Posterior cingulate gyrus (tissue), 11 donors: ENCODE measurements at regions of chr1 and their contacts with region 1.

Region 1: DNA sequence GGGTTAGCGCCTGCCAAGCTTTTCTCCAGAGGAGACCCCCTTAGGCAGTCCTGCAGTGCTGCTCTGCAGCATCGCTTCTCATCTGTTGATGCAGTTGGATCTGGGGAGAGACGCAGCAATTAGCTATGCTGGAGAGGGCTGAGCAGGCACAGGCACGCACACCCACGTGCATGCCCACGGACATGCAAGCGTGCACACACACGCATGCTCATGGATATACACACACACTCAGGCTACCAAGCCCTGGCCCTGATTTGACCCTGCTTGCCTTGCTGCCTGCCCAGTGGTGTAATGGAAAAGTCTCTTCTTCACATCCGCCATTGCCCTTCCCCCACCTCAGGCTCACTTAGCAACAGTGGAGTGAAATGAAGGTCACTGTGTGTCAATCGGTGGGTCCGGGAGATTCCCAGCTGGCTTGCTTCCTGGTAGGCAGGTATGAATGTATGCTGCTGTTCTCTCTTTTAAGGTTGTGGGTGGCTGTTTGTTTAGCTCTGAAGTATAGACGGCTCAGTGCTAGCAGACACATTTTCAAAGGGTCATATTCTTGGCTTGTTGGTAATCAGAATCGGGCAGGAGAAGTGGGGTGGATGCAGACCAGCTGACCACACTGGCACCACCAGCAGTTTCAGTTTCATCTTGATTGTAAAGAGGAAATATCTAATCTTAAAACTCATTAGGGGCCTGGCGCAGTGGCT is 9.5 kb downstream of the ATP1B1 start:
- DNase-seq: peak in 3 of 10 donors; percentile 72 to 89 (median 88)

Region 2: DNA sequence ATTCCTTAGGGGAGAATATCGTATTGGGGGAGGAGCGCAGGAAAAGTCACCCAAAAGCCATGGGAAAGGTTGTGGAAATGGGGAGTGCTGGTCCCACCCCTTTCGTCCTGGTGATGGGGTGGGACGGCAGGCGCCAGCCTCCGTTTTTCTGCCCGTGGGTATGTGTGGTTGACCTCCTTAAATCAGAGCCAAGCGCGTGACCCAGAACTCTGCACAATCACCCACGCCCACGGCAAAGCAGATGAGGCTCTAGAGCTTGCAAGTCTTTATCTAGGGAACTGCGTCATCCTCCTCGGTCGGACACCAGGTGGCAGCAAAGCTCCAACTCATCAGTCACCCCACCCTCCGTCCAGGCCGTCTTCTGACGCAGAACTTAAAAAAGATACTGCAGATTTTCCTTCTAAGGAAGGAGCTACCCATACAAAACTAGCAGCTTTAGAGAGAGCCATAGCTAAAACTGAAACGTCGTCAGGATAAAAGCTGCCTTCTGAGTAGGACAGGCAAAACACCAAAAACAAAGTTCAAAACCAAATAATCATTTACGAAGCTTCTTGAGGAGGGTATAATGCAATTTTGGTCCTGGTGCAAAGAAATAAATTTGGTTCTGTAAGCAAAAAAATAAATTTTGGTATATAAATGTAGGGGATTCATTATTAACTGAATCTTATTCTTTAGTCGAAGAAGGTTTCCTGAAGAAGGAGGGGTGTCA is 773.3 kb before region 1 on chr1:
- intact Hi-C with region 1: loop called (anchors 10 kb)
- DNase-seq: peak; percentile 79 to 98 (median 92)